BJ (cell line): ENCODE measurements at regions of chr9 and their contacts with region 1.

Region 1: GRCh38 chr9:108182950-108183381 is 672.8 kb downstream of the ACTL7B start:
- DNase-seq: no peak
- H3K4me3 ChIP-seq: no peak overlapping the region
- H3K27me3 ChIP-seq: no peaks in the 10 kb centered on the region
- CTCF ChIP-seq: no peak

Region 2: GRCh38 chr9:108053555-108054061 is 129.4 kb before region 1 on chr9:
- CTCF ChIA-PET with region 1: no interaction called
- POLR2A ChIA-PET with region 1: no interaction called
- DNase-seq: no peak
- H3K4me3 ChIP-seq: no peak overlapping the region
- H3K27me3 ChIP-seq: no peaks in the 10 kb centered on the region
- CTCF ChIP-seq: no peak

Region 3: DNA sequence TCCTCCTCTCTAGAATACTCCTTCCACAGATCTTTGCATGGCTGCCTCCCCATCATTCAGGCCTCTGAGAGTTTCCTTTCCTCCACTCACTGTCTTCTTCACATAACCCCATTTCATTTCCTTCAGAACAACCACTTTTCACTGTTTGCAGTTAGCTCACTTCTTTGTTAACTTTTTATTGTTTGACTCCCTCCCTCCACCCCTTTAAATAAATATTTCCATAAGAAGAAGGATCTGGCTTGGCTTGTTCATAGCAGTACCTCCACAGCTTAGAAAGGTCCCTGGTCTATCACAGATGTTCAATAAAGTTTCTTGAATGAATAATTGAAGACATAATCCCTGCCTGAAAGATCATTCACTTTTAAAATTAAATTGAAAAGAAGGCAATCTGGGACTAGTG is 11.2 kb after region 1 on chr9:
- CTCF ChIA-PET with region 1: no interaction called
- POLR2A ChIA-PET with region 1: no interaction called
- DNase-seq: no peak
- H3K4me3 ChIP-seq: no peak overlapping the region
- H3K27me3 ChIP-seq: no peaks in the 10 kb centered on the region
- CTCF ChIP-seq: no peak

Region 4: DNA sequence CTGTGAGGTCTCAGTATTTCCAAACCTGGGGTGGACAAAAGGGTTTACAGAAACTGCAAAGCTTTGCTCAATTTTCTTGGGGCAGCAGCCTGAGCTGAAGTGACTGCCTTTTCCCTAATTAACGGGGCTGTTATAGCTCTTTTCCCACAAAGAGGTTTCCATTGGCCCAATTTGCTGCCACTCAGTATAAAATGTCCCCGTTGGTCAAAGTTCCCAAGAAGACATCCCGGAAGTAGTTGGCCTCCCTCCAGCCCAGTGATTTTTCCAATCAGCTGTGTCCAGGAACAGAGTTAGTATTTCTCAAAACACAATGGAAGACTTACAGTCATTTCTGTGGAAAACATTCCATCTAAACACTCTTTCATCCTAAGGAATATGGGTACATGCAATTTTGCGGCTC is 29.2 kb after region 1 on chr9:
- CTCF ChIA-PET with region 1: interaction called, 3 read pairs
- POLR2A ChIA-PET with region 1: interaction called, 13 read pairs
- DNase-seq: no peak
- H3K4me3 ChIP-seq: no peak overlapping the region
- H3K27me3 ChIP-seq: no peaks in the 10 kb centered on the region
- CTCF ChIP-seq: no peak